Activated CD4-positive, alpha-beta T cell treated with anti-CD3 and anti-CD28 coated beads for 36 hours (primary cell): ENCODE measurements at regions of chr18 and their contacts with region 1.

Region 1: GRCh38 chr18:63216516-63217311 is 102.9 kb downstream of the BCL2 start:
- DNase-seq: peak; percentile 56
- ATAC-seq: peak; percentile 28
- H3K4me3 Mint-ChIP-seq: peak overlapping the region; percentile 34
- H3K27ac Mint-ChIP-seq: peak overlapping the region; percentile 91
- H3K4me1 Mint-ChIP-seq: peaks cover 95% of the 10 kb centered on the region
- H3K27me3 Mint-ChIP-seq: no peaks in the 10 kb centered on the region

Region 2: DNA sequence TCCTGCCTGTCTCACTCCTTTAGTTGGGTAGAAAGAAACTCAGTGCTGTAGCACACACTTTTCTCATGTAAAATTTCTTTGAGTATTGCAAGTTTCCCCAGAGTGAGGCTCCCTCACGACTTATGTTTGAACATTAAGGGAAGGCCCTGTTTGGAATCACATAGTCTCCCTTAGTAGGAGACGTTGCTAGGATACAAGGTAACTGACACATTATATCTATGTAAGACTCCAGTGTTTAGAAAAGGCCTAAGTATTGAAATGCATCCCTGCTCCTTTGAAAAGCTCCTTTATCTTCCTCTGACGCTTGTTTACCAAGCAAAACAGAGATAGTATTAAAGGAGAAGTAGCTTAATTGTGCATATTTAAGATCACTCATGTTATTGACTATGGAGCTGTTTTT is 253.2 kb before region 1 on chr18:
- CTCF ChIA-PET with region 1: no interaction called
- POLR2A ChIA-PET with region 1: no interaction called
- intact Hi-C with region 1: no loop called
- DNase-seq: no peak
- ATAC-seq: no peak
- H3K4me3 Mint-ChIP-seq: no peak overlapping the region
- H3K27ac Mint-ChIP-seq: no peak overlapping the region
- H3K4me1 Mint-ChIP-seq: no peaks in the 10 kb centered on the region
- H3K27me3 Mint-ChIP-seq: no peaks in the 10 kb centered on the region

Region 3: GRCh38 chr18:63105636-63106316 is 110.9 kb before region 1 on chr18:
- CTCF ChIA-PET with region 1: no interaction called
- POLR2A ChIA-PET with region 1: no interaction called
- intact Hi-C with region 1: loop called in 1 of 2 experiments (anchors 2 kb)
- DNase-seq: no peak
- ATAC-seq: no peak
- H3K4me3 Mint-ChIP-seq: no peak overlapping the region
- H3K27ac Mint-ChIP-seq: no peak overlapping the region
- H3K4me1 Mint-ChIP-seq: peaks cover 29% of the 10 kb centered on the region
- H3K27me3 Mint-ChIP-seq: peaks cover 4% of the 10 kb centered on the region

Region 4: DNA sequence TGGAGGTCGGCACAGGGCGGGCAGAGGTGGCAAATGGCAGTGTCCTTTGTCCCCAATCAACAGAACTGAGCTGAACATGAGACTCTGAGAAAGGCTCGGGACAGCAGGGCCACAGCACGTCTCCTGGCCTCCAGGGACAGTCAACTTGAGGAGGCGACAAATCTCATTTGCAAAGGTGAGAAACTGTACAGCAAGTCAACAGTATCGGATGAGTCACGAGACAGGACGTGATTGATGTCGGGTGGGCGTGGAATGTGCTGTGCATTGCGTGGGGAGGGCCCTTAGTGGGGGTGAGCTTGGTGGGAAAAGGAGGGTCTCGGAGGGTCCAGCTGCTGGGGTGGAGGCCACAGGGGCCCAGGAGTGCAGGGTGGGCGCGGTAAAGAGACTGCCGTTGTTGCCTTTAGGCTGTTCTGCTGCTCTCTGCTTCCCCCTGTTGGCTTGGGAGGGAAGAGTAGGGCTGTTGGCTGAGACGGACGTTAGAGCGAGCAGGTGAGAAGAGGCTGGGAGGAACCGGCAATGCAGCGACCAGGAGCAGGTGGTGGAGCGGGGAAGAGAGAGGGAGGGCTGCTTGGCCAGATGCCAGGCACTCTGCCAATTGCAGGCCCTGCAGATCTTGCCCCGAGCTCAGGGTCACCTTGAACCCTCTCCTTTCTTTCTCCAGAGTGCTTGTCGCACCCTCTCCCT is 61.4 kb before region 1 on chr18:
- CTCF ChIA-PET with region 1: interaction called, 10 read pairs
- POLR2A ChIA-PET with region 1: interaction called, 8 read pairs
- intact Hi-C with region 1: no loop called
- DNase-seq: peak; percentile 89
- ATAC-seq: peak; percentile 66
- H3K4me3 Mint-ChIP-seq: peak overlapping the region; percentile 73
- H3K27ac Mint-ChIP-seq: peak overlapping the region; percentile 95
- H3K4me1 Mint-ChIP-seq: peaks cover 99% of the 10 kb centered on the region
- H3K27me3 Mint-ChIP-seq: no peaks in the 10 kb centered on the region

Region 5: GRCh38 chr18:63199743-63200241 is 16.9 kb before region 1 on chr18:
- CTCF ChIA-PET with region 1: interaction called, 9 read pairs
- POLR2A ChIA-PET with region 1: no interaction called
- intact Hi-C with region 1: loop called (anchors 1 kb)
- DNase-seq: peak; percentile 56
- ATAC-seq: peak; percentile 82
- H3K4me3 Mint-ChIP-seq: no peak overlapping the region
- H3K27ac Mint-ChIP-seq: no peak overlapping the region
- H3K4me1 Mint-ChIP-seq: peaks cover 42% of the 10 kb centered on the region
- H3K27me3 Mint-ChIP-seq: no peaks in the 10 kb centered on the region

Region 6: GRCh38 chr18:63237881-63238667 is 21.4 kb after region 1 on chr18:
- CTCF ChIA-PET with region 1: interaction called, 3 read pairs
- POLR2A ChIA-PET with region 1: no interaction called
- intact Hi-C with region 1: loop called (anchors 1 to 2 kb)
- DNase-seq: no peak
- ATAC-seq: no peak
- H3K4me3 Mint-ChIP-seq: no peak overlapping the region
- H3K27ac Mint-ChIP-seq: peak overlapping the region; percentile 53
- H3K4me1 Mint-ChIP-seq: peaks cover 71% of the 10 kb centered on the region
- H3K27me3 Mint-ChIP-seq: no peaks in the 10 kb centered on the region

Region 7: GRCh38 chr18:63299837-63300745 is 83.4 kb after region 1 on chr18:
- CTCF ChIA-PET with region 1: no interaction called
- POLR2A ChIA-PET with region 1: interaction called, 7 read pairs
- intact Hi-C with region 1: loop called (anchors 1 kb)
- DNase-seq: peak; percentile 69
- ATAC-seq: peak; percentile 71
- H3K4me3 Mint-ChIP-seq: peak overlapping the region; percentile 43
- H3K27ac Mint-ChIP-seq: peak overlapping the region; percentile 90
- H3K4me1 Mint-ChIP-seq: peaks cover 75% of the 10 kb centered on the region
- H3K27me3 Mint-ChIP-seq: no peaks in the 10 kb centered on the region